Dorsolateral prefrontal cortex (tissue), 120 donors: ENCODE measurements at regions of chr17 and their contacts with region 1.

Region 1: DNA sequence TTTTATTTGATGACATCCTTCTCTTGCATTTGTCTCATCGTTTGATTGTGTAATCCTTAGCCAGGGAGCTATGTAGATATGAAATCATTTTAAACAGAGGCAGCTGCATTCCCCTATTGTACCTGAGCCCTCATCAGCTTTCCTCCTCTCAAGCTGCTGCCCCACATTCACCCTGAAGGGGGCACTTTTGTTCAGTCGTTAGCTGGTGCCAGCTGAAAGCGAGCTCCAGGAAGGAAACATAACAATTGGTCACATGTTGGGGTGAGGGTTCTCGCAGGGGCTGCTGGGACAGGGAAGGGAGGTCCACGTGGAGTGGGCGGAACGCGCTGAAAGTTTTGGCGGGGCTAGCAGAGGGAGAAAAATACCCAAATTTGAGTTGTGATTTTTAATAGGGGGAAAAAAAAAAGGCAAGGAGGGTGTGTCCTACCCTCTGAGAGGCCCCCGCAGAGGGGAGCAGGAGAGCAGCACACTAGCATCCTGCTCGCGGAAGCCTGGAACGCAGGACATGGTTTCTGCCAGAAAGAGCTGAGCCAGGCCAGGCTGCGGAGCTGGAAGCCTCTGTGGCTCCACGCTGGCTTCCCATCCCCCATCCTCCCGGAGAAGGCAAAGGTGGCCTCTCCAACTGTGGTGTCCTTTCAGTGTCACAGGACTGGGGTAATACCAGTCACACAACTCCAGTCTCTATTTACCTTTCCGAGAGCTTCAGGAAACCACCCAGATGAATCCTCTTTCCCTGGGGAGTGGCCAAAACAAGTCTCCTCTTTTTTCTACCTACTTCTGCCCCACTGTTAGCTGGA is 8.5 kb upstream of the MSL1 start:
- DNase-seq: peak; percentile 91 to 97 (median 94)
- H3K4me3 ChIP-seq: peak overlapping the region; percentile 26 to 79 (median 62)
- H3K27ac ChIP-seq: peak overlapping the region; percentile 14 to 100 (median 98)
- H3K27me3 ChIP-seq: no peaks in the 10 kb centered on the region
- CTCF ChIP-seq: peak; percentile 75 to 100 (median 99)

Region 2: DNA sequence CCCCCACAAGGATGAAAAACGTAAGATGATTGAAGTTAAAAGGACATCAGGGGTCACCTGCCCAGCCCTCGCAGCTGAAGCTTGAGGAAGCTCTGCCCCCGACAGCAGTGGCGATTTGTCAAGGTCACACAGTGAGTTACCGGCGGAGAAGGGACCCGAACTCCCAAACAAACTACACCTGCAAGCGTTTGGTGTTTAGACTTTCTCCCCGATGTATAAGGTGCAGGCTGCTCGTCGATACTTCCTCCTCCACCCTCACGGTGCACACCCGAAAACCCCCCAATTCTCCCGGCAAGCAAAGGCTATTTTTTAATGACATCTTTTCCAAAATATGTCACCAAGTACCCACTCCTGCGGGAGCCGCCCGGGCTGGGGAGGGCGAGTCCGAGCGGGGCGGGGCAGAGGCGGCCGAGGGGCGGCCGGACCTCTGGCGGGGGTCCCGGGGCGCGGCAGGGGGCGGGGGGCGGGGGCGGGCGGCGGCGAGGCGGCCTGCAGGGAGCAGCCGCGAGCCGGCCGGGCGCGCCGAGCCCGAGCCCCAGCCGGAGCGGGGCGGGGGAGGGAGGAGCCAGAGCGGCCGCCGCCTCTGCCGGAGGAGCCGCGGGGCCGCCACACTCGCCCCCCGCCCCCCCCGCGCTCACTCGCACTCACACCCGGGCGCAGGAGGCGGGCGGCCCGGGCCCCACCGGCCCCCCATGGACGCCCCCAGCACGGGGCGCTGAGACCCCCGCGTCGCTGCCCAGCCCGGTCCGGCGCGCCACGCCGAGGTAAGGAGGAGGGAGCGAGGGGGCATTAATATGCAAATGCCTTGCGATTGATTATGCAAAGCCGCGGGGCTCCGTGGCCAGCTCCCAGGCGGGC is 50.8 kb before region 1 on chr17 and contains the start of gene THRA:
- intact Hi-C with region 1: loop called in 1 of 2 experiments (anchors 2 kb)
- DNase-seq: peak in 7 of 10 donors; percentile 36 to 86 (median 76)
- H3K4me3 ChIP-seq: peak within 1 kb of the TSS; percentile 67 to 100 (median 99)
- H3K27ac ChIP-seq: peak within 1 kb of the TSS; percentile 96 to 100 (median 100)
- H3K27me3 ChIP-seq: no peaks in the 10 kb centered on the region
- CTCF ChIP-seq: peak in 21 of 56 donors; percentile 1 to 50 (median 29)
- total RNA-seq, gene THRA: 178 to 301 (median 231) TPM

Region 3: DNA sequence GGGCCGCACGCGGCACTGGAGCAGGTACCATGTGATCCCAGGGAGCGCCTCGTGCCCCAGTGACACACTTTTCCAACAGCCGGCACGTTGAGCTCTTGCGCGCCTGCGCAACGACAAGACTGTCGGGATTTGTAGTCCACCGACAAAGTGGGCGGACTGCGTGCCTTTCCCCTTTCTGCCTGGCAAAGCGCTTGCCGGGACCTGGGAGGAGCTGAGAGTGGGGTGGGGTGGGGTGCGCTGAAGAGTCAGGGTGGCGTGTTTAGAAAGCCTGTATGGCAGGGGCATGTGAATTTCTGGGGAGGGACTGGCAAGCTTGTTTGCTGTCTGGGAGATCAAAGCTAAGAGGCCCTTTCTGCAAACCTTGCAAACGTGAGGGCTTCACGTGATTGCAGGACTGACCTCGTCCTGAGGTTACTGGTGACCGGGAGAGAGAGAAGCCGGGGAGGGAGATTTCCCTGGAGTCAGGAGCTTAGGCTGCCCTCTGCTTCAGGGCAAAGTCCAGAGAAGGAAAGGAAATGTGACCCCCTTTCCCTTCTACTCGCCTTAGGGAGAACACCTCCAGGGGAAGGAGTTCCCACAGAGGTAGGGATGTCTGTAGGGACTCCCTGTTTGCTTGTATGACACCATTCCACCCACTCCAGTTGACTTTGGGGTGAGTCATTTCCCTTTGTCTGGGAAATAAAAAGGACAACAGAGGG is 12.5 kb before region 1 on chr17:
- intact Hi-C with region 1: loop called in 1 of 2 experiments (anchors 1 kb)
- DNase-seq: peak; percentile 97 to 99 (median 98)
- H3K4me3 ChIP-seq: peak overlapping the region; percentile 66 to 99 (median 89)
- H3K27ac ChIP-seq: peak overlapping the region; percentile 82 to 100 (median 96)
- H3K27me3 ChIP-seq: no peaks in the 10 kb centered on the region
- CTCF ChIP-seq: peak in 13 of 56 donors; percentile 3 to 42 (median 13)

Region 4: GRCh38 chr17:40168262-40168832 is 55.0 kb after region 1 on chr17:
- intact Hi-C with region 1: loop called (anchors 1 kb)
- DNase-seq: peak in 2 of 10 donors; percentile 37 to 56
- H3K4me3 ChIP-seq: no peak overlapping the region
- H3K27ac ChIP-seq: peak overlapping the region; percentile 10 to 95 (median 79)
- H3K27me3 ChIP-seq: no peaks in the 10 kb centered on the region
- CTCF ChIP-seq: peak; percentile 75 to 95 (median 88)

Region 5: DNA sequence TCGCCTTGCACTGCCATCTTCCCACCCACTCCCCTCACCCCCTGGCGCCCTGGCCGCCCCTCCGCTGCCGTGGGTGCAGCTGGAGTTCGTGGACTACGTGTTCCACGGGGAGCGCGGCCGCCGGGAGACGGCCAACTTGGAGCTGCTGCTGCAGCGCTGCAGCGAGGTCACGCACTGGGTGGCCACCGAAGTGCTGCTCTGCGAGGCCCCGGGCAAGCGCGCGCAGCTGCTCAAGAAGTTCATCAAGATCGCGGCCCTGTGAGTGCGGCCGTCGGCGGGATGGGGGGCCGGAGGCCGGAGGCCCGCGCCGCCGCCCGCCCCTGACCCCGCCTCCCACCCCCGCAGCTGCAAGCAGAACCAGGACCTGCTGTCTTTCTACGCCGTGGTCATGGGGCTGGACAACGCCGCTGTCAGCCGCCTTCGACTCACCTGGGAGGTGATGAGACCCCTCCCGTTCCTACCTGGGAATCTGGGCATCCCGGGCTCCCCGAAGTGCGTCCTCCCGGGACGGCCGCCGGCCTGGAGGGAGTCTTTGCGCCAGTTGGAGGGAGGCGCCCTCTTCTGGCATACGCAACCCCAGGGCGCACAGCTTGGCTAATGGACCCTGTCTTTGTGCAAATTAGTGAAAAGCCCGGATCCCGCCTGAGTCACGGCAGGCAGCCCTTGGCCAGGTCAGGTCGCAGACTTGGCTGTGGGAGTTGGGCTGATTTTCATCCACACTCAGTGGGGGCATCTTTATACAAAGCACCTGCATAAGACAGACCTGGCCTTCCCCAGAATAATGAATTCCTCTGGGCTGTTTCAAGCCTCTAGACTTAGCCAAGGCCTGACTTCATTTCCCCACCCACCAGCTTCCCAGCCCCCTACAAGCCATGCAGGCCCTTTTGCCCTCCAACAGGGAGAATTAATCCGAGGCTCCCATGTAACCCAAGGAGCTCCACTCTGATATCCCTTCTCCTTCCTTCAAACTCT is 78.2 kb after region 1 on chr17:
- intact Hi-C with region 1: loop called in 1 of 2 experiments (anchors 2 kb)
- DNase-seq: peak; percentile 63 to 80 (median 74)
- H3K4me3 ChIP-seq: peak overlapping the region; percentile 35 to 74 (median 60)
- H3K27ac ChIP-seq: peak overlapping the region in 50 of 59 donors; percentile 7 to 83 (median 64)
- H3K27me3 ChIP-seq: no peaks in the 10 kb centered on the region
- CTCF ChIP-seq: peak; percentile 14 to 81 (median 67)